A549 (cell line): ENCODE measurements at regions of chr1 and their contacts with region 1.

Region 1: DNA sequence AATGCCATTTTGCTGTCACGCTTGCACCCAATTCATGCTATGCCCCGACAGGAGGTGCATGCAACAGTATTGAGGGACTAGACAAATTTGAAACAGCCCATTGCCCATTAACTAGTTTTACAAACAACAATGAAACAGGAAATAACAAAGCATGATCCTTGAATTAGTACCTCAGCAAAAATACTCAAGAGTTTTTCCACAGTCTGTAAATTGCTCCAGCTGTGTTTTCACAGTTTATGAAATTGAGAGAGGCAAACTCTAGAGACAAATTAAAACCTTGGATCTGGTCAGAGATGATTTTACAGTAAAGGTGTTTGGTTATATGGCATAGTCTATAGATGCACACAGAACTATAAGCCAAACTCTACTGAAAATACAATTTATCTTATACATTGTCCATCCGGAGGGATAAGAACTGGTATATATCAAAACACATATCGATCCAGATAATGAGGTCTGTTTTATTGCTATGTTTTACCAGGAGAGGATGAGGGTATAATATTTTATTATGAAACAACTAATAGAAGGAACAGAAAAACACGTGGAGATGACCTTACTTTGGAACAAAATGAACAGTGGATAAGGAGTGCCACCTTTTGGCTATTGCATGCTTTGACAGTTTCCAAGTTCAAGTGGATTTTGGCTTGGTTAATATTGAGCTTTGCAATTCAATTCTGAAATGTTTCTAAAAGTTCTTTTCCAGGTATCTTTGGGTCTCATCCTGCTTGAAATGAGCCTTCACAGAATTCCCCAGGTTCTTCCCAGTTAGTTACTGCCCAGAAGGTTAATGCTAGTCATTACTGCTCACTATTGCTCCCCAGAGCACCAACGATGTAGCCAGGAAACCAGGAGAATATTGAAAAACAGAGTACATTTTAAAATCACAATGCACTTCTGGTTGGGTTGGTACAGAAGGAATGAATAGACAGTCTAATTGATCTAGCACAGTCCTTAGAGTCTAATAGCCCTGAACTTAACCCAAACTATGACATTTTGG is 45.7 kb downstream of the ZC3H11B start:
- DNase-seq: peak in 1 of 2 experiments; percentile 69
- ATAC-seq: peak; percentile 77 to 88; a peak in 5 of 6 replicates
- H3K4me3 ChIP-seq: no peak overlapping the region
- H3K27ac ChIP-seq: peak overlapping the region; percentile 23 to 71; a peak in 4 of 6 replicates
- H3K4me1 ChIP-seq: peaks cover 25% of the 10 kb centered on the region
- CTCF ChIP-seq: peak; percentile 88
- EP300 ChIP-seq: no peak
- POLR2A ChIP-seq: no peak
- RAD21 ChIP-seq: peak; percentile 92 to 93

Region 2: DNA sequence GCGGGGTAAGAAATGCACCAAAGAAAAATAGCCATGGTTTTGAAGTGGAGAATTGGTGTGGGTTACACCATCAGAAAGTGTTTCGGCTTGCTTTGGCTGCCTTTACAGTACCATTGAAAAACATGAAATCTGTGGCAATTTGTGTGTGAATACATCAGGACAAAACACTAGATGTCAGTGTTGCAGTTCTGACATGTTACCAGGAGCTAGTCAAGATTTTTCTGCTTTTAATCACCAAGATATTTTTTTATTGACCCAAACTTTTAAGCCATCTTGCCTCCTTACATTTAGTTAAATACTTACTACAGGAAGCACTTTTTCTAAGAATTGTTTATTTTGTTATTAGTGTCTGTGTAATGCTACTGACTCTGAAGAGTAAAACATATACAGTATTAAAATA is 1267.8 kb before region 1 on chr1:
- CTCF ChIA-PET with region 1: interaction called, 11 read pairs
- POLR2A ChIA-PET with region 1: no interaction called
- DNase-seq: peak; percentile 26 to 62
- ATAC-seq: peak; percentile 77 to 88; a peak in 5 of 6 replicates
- H3K4me3 ChIP-seq: no peak overlapping the region
- H3K27ac ChIP-seq: no peak overlapping the region
- H3K4me1 ChIP-seq: peaks cover 28% of the 10 kb centered on the region
- CTCF ChIP-seq: peak; percentile 75
- EP300 ChIP-seq: no peak
- POLR2A ChIP-seq: no peak
- RAD21 ChIP-seq: peak; percentile 68 to 70

Region 3: DNA sequence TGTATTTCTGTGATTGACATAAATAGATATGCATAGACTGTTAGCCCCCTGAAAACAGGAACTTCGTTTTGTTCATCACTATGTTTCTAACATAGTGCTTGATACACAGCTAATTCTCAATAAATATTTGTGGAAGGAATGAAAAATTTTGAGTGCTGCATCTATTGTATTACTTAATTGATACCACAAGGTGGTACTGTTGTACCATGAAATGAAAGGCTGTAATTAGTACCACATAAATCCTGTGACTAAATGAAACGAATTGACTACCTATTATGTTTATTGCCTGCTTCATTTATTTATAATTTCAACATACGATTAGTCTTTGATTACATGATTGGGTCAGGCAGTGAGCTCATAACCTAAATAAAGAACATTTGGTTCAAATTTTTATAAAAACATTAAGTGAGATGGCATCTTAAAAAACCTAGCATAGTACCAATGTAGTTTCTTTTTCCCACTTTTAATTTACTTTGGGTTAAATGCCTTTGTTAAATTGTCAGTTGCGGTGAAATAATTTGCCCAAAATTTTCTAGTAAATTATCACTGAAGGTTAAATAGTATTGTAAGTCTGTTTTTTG is 1237.1 kb before region 1 on chr1:
- CTCF ChIA-PET with region 1: interaction called, 35 read pairs
- POLR2A ChIA-PET with region 1: no interaction called
- DNase-seq: peak; percentile 43 to 53
- ATAC-seq: peak in 1 of 2 experiments; percentile 60; a peak in 3 of 6 replicates
- H3K4me3 ChIP-seq: no peak overlapping the region
- H3K27ac ChIP-seq: peak overlapping the region in 1 of 2 experiments; percentile 56; a peak in 3 of 6 replicates
- H3K4me1 ChIP-seq: peaks cover 17% of the 10 kb centered on the region; the same call in 2 of the 3 replicates
- CTCF ChIP-seq: peak; percentile 92
- EP300 ChIP-seq: no peak
- POLR2A ChIP-seq: no peak
- RAD21 ChIP-seq: peak; percentile 95 to 96

Region 4: GRCh38 chr1:218336328-218336727 is 1230.9 kb before region 1 on chr1:
- CTCF ChIA-PET with region 1: interaction called, 12 read pairs
- POLR2A ChIA-PET with region 1: no interaction called
- DNase-seq: peak in 1 of 2 experiments; percentile 73
- ATAC-seq: peak; percentile 62 to 86; a peak in 5 of 6 replicates
- H3K4me3 ChIP-seq: no peak overlapping the region
- H3K27ac ChIP-seq: peak overlapping the region; percentile 63 to 71
- H3K4me1 ChIP-seq: peaks cover 47% of the 10 kb centered on the region
- CTCF ChIP-seq: no peak
- EP300 ChIP-seq: peak; percentile 34 to 49; a peak in 2 of 5 replicates
- POLR2A ChIP-seq: no peak
- RAD21 ChIP-seq: no peak

Region 5: DNA sequence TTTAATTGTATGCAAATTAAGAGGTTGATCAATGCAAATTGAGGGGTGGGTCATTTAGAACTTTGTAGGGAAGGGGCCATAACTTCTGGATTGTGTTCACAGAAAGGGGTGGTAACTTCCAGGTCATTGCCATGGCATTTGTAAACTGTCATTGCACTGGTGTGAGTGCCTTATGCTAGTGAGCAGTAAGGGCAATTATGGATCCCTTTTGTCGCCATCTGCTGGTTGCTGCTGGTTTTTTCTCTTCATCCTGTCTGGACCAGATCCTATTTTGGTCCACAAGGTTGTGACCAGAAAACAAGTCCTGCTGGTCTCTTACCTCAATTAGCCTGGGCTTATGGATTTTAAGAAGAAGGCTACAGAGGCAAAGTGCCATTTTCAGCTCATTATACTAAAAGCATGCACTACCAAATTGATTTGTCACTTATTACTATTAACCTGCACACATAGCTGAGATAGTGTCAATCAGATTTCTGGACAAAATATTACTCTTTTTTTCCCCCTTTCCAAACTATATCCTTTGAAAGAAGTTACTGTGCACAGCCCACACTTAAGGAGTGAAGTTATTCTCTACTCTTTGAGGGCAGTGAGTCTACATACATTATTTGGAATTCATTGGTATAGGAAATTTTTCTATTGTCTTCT is 150.5 kb before region 1 on chr1:
- CTCF ChIA-PET with region 1: no interaction called
- POLR2A ChIA-PET with region 1: no interaction called
- DNase-seq: peak in 1 of 2 experiments; percentile 58
- ATAC-seq: peak; percentile 77 to 91; a peak in 4 of 6 replicates
- H3K4me3 ChIP-seq: no peak overlapping the region
- H3K27ac ChIP-seq: no peak overlapping the region
- H3K4me1 ChIP-seq: peaks cover 8% of the 10 kb centered on the region; the same call in 1 of the 3 replicates
- CTCF ChIP-seq: peak; percentile 67
- EP300 ChIP-seq: no peak
- POLR2A ChIP-seq: no peak
- RAD21 ChIP-seq: peak; percentile 56 to 66

Region 6: DNA sequence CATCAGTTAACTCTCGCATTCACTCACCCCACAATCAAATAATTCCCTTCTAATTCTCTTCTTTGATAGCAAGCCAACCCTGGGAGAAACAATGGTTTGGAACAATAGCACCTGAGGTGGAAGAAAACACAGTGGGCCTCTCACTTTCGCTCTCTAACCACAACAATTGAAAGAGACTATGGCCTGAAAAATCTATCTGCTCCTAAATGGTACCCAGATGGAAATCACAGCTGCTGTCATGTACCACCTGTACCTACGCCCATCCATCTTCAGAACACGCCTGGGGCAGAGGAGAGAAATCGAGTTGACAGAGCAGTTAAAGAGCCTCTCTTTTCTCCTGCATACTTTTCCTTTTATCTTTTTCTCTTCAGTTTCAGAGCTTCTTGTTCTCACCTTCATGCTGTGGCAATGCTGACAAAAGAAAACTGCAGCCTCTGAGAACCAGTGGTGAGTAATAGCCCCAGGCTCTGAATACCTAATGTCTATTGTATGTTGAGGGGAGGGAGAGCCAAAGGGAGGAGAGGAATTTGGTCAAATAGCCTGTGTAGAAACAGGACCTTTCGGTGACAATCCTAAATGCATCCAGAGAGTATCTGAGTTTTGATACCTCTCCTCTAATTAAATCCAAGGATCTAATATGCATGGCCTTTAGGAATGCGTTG is 12.1 kb before region 1 on chr1:
- CTCF ChIA-PET with region 1: interaction called, 22 read pairs
- POLR2A ChIA-PET with region 1: interaction called, 3 read pairs
- DNase-seq: peak; percentile 44 to 61
- ATAC-seq: peak; percentile 65 to 93
- H3K4me3 ChIP-seq: no peak overlapping the region
- H3K27ac ChIP-seq: peak overlapping the region; percentile 71 to 73
- H3K4me1 ChIP-seq: peaks cover 26% of the 10 kb centered on the region
- CTCF ChIP-seq: no peak
- EP300 ChIP-seq: no peak
- POLR2A ChIP-seq: no peak
- RAD21 ChIP-seq: no peak